ENCODE measurements at regions of chr7 and their contacts with region 1.

Region 1: GRCh38 chr7:23531794-23532489 is at the start of gene TRA2A:
- DNase-seq: peak; percentile 98
- ATAC-seq: peak; percentile 93
- H3K4me3 Mint-ChIP-seq: peak within 1 kb of the TSS; percentile 96
- H3K27ac Mint-ChIP-seq: peak within 1 kb of the TSS; percentile 100
- H3K4me1 Mint-ChIP-seq: peaks cover 41% of the 10 kb centered on the region
- H3K27me3 Mint-ChIP-seq: no peaks in the 10 kb centered on the region
- total RNA-seq, gene TRA2A: 86.8 to 143 TPM

Region 2: GRCh38 chr7:22822486-22823141 is 709.3 kb before region 1 on chr7 and contains the start of gene TOMM7:
- CTCF ChIA-PET with region 1: no interaction called
- POLR2A ChIA-PET with region 1: no interaction called
- intact Hi-C with region 1: loop called in 1 of 2 experiments (anchors 2 kb)
- DNase-seq: peak; percentile 92
- ATAC-seq: peak; percentile 81
- H3K4me3 Mint-ChIP-seq: peak within 1 kb of the TSS; percentile 98
- H3K27ac Mint-ChIP-seq: peak within 1 kb of the TSS; percentile 93
- H3K4me1 Mint-ChIP-seq: peaks cover 35% of the 10 kb centered on the region
- H3K27me3 Mint-ChIP-seq: peaks cover 6% of the 10 kb centered on the region
- total RNA-seq, gene TOMM7: 73.7 to 254 TPM

Region 3: GRCh38 chr7:23181684-23182553 is 350.0 kb before region 1 on chr7 and contains the start of gene NUP42:
- CTCF ChIA-PET with region 1: no interaction called
- POLR2A ChIA-PET with region 1: no interaction called
- intact Hi-C with region 1: loop called (anchors 5 kb)
- DNase-seq: peak; percentile 98
- ATAC-seq: peak; percentile 98
- H3K4me3 Mint-ChIP-seq: peak within 1 kb of the TSS; percentile 88
- H3K27ac Mint-ChIP-seq: peak within 1 kb of the TSS; percentile 97
- H3K4me1 Mint-ChIP-seq: peaks cover 30% of the 10 kb centered on the region
- H3K27me3 Mint-ChIP-seq: no peaks in the 10 kb centered on the region
- total RNA-seq, gene NUP42: 32.3 to 44.8 TPM

Region 4: DNA sequence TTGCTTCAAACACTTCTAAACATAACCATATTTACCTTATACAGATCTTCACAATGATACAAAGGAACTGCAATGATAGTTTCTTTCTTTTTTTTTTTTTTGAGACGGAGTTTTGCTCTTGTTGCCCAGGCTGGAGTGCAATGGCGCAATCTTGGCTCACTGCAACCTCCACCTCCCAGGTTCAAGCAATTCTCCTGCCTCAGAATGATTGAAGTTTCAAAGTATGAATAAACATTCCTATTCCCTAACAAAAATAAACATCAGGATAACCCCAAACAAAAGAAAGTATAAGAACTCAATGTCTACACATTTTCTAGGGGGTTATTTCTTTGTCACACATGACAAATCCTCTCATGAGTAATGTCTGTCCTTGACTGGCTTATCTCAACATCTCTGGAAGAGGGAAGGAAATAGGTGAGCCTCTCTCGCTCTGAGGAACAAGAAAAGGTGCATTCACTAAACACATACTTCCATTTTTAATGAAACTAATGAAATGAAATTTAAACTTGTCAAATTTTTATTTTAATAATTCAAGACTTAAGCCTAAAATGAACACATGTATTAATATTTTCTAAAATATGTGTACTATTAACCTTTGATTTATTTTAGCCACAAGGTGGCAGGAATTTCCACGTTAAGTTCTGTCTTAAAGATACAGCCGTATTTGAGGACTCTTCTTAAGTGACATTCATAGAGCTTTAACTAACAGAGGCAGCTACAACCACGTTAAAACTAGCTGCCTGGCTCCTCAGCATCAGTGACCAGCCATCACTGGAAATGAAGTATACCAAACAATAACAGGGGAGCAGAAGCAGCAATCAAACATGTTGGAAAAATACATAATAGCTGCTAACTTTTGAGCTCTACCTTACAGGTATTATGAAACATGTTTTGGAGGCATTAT is 174.5 kb before region 1 on chr7:
- CTCF ChIA-PET with region 1: interaction called, 3 read pairs
- POLR2A ChIA-PET with region 1: interaction called, 3 read pairs
- intact Hi-C with region 1: loop called (anchors 5 kb)
- DNase-seq: no peak
- ATAC-seq: peak; percentile 42
- H3K4me3 Mint-ChIP-seq: no peak overlapping the region
- H3K27ac Mint-ChIP-seq: no peak overlapping the region
- H3K4me1 Mint-ChIP-seq: peaks cover 18% of the 10 kb centered on the region
- H3K27me3 Mint-ChIP-seq: peaks cover 7% of the 10 kb centered on the region

Region 5: GRCh38 chr7:23474094-23474828 is 57.7 kb before region 1 on chr7:
- CTCF ChIA-PET with region 1: no interaction called
- POLR2A ChIA-PET with region 1: no interaction called
- intact Hi-C with region 1: loop called (anchors 1 to 5 kb)
- DNase-seq: peak; percentile 94
- ATAC-seq: peak; percentile 91
- H3K4me3 Mint-ChIP-seq: peak overlapping the region; percentile 63
- H3K27ac Mint-ChIP-seq: peak overlapping the region; percentile 38
- H3K4me1 Mint-ChIP-seq: peaks cover 26% of the 10 kb centered on the region
- H3K27me3 Mint-ChIP-seq: peaks cover 57% of the 10 kb centered on the region

Region 6: DNA sequence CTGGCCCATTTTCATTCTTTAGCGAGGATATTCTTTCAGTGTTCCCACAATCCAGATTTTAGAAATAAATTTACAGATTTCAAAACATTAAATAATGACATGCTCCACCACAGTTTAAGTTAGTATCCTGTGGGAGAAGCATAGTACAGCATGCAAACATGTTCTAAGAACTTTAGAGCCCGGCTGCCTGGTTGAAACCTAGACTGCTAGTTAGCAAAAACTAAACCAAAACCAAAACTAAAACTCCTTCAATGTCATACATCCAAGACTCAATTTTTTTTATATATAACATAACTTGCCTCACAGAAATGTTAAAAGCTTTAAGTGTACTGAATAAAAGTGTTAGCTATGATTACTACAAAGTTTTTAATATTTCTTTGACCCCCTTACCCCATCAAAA is 17.2 kb before region 1 on chr7:
- CTCF ChIA-PET with region 1: interaction called, 8 read pairs
- POLR2A ChIA-PET with region 1: interaction called, 9 read pairs
- intact Hi-C with region 1: loop called in 1 of 2 experiments (anchors 2 kb)
- DNase-seq: peak; percentile 40
- ATAC-seq: peak; percentile 88
- H3K4me3 Mint-ChIP-seq: no peak overlapping the region
- H3K27ac Mint-ChIP-seq: peak overlapping the region; percentile 82
- H3K4me1 Mint-ChIP-seq: peaks cover 22% of the 10 kb centered on the region
- H3K27me3 Mint-ChIP-seq: no peaks in the 10 kb centered on the region

Region 7: DNA sequence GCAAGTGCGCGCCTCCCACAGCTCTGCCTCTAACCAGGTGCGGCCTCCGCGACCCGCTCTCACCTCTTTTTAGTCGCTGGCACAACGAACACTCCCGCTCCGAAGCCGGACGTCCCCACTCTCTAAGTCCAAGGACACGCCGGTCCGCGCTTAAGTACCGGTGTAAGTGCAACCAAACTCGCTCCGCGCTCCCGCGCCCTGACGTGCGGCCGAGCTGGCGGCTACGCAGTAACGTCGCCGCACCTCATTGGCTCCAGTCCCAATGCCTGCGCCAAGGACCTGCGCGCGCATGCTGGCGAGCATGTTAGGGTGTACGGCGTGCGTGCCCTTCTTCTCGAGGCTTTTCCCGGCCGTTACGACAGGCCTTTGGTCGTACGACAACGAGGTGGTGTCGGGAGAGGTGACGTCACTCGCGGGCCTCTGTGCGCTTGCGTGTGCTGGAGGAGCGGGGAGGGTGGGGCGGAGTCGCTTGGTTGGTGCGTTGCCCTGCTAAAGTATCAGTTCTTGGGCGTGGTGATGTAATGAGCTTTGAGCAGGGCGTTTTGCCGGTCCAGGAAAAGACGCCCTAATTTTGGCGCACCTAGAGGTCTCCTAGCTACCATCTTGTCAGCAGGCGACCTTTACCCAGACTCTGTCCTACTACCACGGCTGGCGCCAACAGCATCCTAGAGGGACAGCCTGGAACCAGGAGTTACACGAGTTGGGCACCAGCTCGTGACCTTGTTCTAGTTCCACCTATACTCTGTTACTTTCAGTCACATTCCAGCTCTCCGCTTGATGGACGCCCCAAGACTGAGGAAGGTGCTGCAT is 1593.4 kb after region 1 on chr7 and contains the start of gene CYCS:
- CTCF ChIA-PET with region 1: no interaction called
- POLR2A ChIA-PET with region 1: no interaction called
- intact Hi-C with region 1: loop called in 1 of 2 experiments (anchors 10 kb)
- DNase-seq: peak; percentile 100
- ATAC-seq: peak; percentile 97
- H3K4me3 Mint-ChIP-seq: peak within 1 kb of the TSS; percentile 97
- H3K27ac Mint-ChIP-seq: peak within 1 kb of the TSS; percentile 98
- H3K4me1 Mint-ChIP-seq: peaks cover 27% of the 10 kb centered on the region
- H3K27me3 Mint-ChIP-seq: no peaks in the 10 kb centered on the region
- total RNA-seq, gene CYCS: 222 to 237 TPM

Measured in activated CD4-positive, alpha-beta T cell treated with anti-CD3 and anti-CD28 coated beads for 36 hours (primary cell).